Dorsolateral prefrontal cortex (tissue), 120 donors: ENCODE measurements at regions of chr4 and their contacts with region 1.

Region 1: DNA sequence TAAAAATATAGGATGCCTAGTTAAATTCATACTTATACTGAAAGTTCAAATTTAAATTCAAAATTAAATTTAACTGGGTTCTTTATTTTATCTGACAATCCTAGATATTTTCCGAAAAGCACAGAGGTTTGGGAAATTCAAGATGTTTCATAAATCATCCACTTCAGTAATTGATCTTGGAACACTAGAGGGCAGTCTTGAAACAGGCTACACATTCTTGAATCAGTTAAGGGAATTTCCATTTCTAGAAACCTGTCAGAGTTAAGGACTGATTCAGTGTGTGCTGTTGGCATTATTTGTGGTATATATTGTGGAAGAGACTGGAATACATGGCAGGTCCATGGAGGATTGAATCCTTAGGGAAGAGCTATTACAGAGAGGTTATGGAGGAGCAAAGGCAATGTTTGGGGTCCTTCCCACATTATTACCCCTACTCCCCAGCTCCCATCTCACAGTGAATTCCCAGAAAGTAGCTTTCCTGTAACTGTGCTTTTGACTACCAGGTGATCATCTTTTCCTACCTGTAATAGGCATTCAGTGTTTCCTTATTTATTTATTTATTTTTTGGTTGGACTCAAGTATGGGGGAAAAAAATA is 92.9 kb downstream of the EGF start:
- DNase-seq: no peak
- H3K4me3 ChIP-seq: no peak overlapping the region
- H3K27ac ChIP-seq: no peak overlapping the region
- H3K27me3 ChIP-seq: peaks cover 0 to 5% (median 0%) of the 10 kb centered on the region in 45 donors
- CTCF ChIP-seq: peak; percentile 56 to 96 (median 84)

Region 2: GRCh38 chr4:110049951-110050925 is 44.7 kb after region 1 on chr4:
- intact Hi-C with region 1: loop called in 1 of 2 experiments (anchors 5 kb)
- DNase-seq: peak in 5 of 10 donors; percentile 45 to 68 (median 50)
- H3K4me3 ChIP-seq: peak overlapping the region in 1 of 59 donors; percentile 18
- H3K27ac ChIP-seq: peak overlapping the region in 17 of 59 donors; percentile 7 to 75 (median 43)
- H3K27me3 ChIP-seq: no peaks in the 10 kb centered on the region
- CTCF ChIP-seq: peak; percentile 54 to 91 (median 83)

Region 3: GRCh38 chr4:110211007-110211769 is 205.6 kb after region 1 on chr4:
- intact Hi-C with region 1: loop called in 1 of 2 experiments (anchors 5 kb)
- DNase-seq: no peak
- H3K4me3 ChIP-seq: peak overlapping the region in 5 of 59 donors; percentile 5 to 39 (median 27)
- H3K27ac ChIP-seq: no peak overlapping the region
- H3K27me3 ChIP-seq: no peaks in the 10 kb centered on the region
- CTCF ChIP-seq: peak; percentile 48 to 88 (median 73)

Region 4: GRCh38 chr4:110310795-110311194 is 305.2 kb after region 1 on chr4:
- intact Hi-C with region 1: loop called in 1 of 2 experiments (anchors 10 kb)
- DNase-seq: no peak
- H3K4me3 ChIP-seq: no peak overlapping the region
- H3K27ac ChIP-seq: no peak overlapping the region
- H3K27me3 ChIP-seq: peaks cover 0 to 3% (median 0%) of the 10 kb centered on the region in 45 donors
- CTCF ChIP-seq: no peak

Region 5: DNA sequence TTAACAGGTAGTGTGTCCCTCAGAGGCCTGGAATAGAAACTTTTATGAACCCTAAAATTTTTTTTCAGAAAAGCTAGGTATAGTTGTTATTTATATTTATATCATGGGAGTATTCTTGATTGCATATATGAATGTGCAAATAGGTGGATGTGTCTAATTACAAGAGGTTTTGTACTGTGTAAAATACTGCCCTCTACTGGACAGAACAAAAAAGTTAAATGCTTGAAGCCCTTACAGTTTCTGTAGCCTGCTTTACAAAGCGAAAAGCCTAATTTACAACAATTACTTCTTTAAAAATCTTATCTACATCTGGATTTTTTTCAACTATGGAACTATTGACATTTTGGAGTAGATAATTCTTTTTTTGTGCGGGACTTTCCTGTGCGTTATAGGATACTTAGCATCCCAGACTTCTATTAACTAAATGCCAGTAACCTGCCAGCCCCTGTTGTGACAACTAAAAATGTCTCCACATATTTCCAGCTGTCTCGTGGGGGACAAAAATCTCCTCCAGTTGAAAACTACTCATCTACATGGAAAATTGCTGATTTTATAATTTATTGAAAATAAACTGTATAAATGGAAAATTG is 505.5 kb after region 1 on chr4:
- intact Hi-C with region 1: loop called (anchors 2 to 5 kb)
- DNase-seq: no peak
- H3K4me3 ChIP-seq: no peak overlapping the region
- H3K27ac ChIP-seq: no peak overlapping the region
- H3K27me3 ChIP-seq: no peaks in the 10 kb centered on the region
- CTCF ChIP-seq: peak; percentile 70 to 96 (median 86)

Region 6: GRCh38 chr4:110516106-110516922 is 510.8 kb after region 1 on chr4:
- intact Hi-C with region 1: loop called (anchors 2 to 5 kb)
- DNase-seq: peak; percentile 30 to 80 (median 64)
- H3K4me3 ChIP-seq: peak overlapping the region in 57 of 59 donors; percentile 0 to 63 (median 44)
- H3K27ac ChIP-seq: peak overlapping the region in 10 of 59 donors; percentile 1 to 49 (median 26)
- H3K27me3 ChIP-seq: peaks cover 0 to 3% (median 0%) of the 10 kb centered on the region in 45 donors
- CTCF ChIP-seq: peak; percentile 63 to 86 (median 76)

Region 7: DNA sequence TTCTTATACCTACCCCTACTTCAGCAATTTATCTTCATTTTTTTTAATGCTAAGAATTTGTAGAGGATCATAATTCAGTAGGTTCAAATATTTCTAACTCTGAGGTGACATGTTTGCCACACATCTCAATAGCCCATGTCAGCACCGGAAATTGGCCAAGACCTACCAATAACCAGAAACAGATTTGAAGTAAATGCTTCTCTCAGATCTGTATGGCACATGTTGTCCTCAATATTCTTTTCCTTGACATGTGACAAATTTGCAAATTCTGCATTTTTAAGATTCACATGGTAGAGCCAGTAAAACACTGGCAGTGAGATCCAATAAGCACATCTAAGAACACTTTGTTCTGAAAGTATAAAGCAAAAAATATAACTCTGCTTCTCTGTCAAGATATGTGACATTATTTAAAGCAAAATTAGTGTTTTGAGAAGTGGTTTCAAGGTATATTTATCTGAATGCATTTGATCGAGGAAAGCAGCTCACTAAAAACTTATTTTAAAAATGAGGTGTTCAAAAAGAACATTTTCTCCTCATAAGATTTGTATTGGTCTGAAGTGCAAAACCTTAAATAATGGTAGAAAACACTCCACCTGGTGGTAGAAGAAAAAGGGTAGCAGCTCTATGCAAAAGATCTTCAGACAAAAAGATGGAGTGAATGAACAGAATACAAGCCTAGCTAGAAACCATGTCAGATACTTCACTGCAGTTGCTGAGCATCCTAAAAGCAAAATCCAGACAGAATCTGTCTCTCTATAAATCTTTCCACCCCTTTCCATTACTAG is 1625.8 kb after region 1 on chr4:
- intact Hi-C with region 1: loop called in 1 of 2 experiments (anchors 10 kb)
- DNase-seq: no peak
- H3K4me3 ChIP-seq: no peak overlapping the region
- H3K27ac ChIP-seq: no peak overlapping the region
- H3K27me3 ChIP-seq: peaks cover 0 to 66% (median 18%) of the 10 kb centered on the region in 45 donors
- CTCF ChIP-seq: peak in 53 of 56 donors; percentile 24 to 62 (median 44)